ENCODE measurements at regions of chr16 and their contacts with region 1.

Region 1: DNA sequence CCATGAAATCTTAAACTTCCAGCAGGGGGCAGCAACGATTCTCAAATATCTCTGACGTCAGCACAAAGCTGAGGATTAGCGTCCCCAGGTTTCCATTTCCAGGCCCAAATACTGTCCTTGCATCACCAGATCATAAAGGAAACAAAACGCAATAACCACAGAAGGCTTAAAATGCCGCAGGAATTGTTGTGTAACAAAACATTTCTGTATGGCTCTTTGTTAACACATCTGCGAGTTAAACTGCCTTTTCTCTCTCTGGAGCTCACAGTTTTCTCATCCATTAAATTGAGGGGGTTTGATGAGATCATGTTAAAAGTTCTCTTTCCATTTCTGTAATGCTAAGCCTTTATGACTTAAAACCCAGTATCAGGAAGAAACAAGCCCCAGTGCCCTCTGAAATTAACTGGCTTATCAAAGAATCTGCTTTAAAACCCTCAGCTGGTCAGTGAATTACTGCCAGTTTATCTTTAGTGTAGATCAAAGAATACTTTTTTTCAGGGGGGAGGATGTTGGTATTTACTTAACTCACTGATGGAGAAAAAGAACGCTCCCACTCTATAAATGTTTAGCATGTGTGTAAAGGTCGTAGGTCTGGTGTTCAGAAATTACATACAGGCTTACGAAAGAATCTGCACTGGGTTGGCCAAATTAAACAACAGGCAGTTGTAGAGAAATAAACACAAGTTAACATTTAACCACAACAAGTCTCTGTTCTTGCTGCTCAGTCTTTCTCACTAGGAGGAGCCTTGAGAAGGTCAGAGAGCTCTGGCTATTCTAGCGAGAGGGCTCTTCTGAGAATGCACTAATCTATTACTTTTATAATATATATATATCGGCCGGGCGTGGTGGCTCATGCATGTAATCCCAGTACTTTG is 10.6 kb upstream of the TERF2 start:
- DNase-seq: peak; percentile 83
- ATAC-seq: peak; percentile 63
- H3K4me3 Mint-ChIP-seq: no peak overlapping the region
- H3K27ac Mint-ChIP-seq: peak overlapping the region; percentile 70
- H3K4me1 Mint-ChIP-seq: peaks cover 20% of the 10 kb centered on the region
- H3K27me3 Mint-ChIP-seq: no peaks in the 10 kb centered on the region

Region 2: DNA sequence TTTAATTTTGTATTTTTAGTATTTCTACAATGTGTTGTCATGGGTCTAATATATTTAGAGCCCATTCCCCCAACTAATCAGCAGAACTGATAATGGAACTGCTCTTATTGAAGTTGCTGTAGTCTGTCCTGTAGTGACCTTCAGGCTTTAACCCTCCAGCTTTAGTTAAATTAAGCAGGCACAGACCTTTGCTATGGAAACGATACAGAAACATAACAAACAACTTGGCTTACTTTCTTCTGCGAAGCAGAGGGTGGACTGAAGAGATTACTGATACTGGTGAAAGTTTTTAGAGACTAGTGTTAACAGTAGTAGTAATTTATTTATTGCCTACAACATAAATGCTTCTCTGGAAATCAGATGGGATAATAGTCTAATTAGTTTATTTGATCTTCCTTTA is 1249.8 kb before region 1 on chr16:
- CTCF ChIA-PET with region 1: no interaction called
- POLR2A ChIA-PET with region 1: no interaction called
- intact Hi-C with region 1: no loop called
- DNase-seq: no peak
- ATAC-seq: no peak
- H3K4me3 Mint-ChIP-seq: no peak overlapping the region
- H3K27ac Mint-ChIP-seq: no peak overlapping the region
- H3K4me1 Mint-ChIP-seq: peaks cover 50% of the 10 kb centered on the region
- H3K27me3 Mint-ChIP-seq: no peaks in the 10 kb centered on the region

Region 3: GRCh38 chr16:69381231-69381630 is 15.2 kb before region 1 on chr16:
- CTCF ChIA-PET with region 1: interaction called, 15 read pairs
- POLR2A ChIA-PET with region 1: no interaction called
- intact Hi-C with region 1: no loop called
- DNase-seq: no peak
- ATAC-seq: no peak
- H3K4me3 Mint-ChIP-seq: no peak overlapping the region
- H3K27ac Mint-ChIP-seq: peak overlapping the region; percentile 42
- H3K4me1 Mint-ChIP-seq: peaks cover 56% of the 10 kb centered on the region
- H3K27me3 Mint-ChIP-seq: no peaks in the 10 kb centered on the region

Region 4: GRCh38 chr16:69443927-69444631 is 47.7 kb after region 1 on chr16:
- CTCF ChIA-PET with region 1: interaction called, 26 read pairs
- POLR2A ChIA-PET with region 1: no interaction called
- intact Hi-C with region 1: loop called in 1 of 2 experiments (anchors 5 kb)
- DNase-seq: peak; percentile 47
- ATAC-seq: peak; percentile 71
- H3K4me3 Mint-ChIP-seq: peak overlapping the region; percentile 65
- H3K27ac Mint-ChIP-seq: peak overlapping the region; percentile 94
- H3K4me1 Mint-ChIP-seq: peaks cover 36% of the 10 kb centered on the region
- H3K27me3 Mint-ChIP-seq: no peaks in the 10 kb centered on the region